Activated T-helper 1 cell treated with anti-CD3 and anti-CD28 coated beads, Interleukin-12 subunit alpha, Interleukin-12 subunit beta, Interleukin-2, Interleukin-4 antibody, amounts not matched to agents 30 ng/mL and 10 ng/mL and 1 ng/mL, durations not matched to agents 14 hours and 24 hours and 36 hours (primary cell): ENCODE measurements at regions of chr2 and their contacts with region 1.

Region 1: DNA sequence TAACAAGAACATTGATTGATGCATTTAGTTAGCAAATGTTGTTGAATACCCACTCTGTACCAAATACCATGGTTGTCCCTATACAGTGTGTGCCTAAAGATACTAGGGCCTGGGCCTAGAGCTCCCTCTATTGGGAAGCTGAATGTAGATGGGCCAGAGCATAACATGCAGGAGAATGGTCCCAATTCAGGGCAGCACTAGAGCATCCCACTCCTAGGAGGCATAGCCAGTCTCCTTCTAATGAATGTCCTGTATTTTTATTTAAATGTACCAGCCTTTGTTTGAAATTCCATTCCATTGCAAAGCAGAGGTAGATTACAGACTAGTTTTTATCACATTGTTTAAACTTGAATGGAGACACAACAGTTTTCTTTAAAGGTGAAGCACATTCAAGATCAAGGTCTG is 90.6 kb downstream of the FEZ2 start:
- DNase-seq: no peak
- H3K4me3 Mint-ChIP-seq: no peak overlapping the region
- H3K27ac Mint-ChIP-seq: no peak overlapping the region
- H3K4me1 Mint-ChIP-seq: no peaks in the 10 kb centered on the region
- H3K27me3 Mint-ChIP-seq: no peaks in the 10 kb centered on the region

Region 2: DNA sequence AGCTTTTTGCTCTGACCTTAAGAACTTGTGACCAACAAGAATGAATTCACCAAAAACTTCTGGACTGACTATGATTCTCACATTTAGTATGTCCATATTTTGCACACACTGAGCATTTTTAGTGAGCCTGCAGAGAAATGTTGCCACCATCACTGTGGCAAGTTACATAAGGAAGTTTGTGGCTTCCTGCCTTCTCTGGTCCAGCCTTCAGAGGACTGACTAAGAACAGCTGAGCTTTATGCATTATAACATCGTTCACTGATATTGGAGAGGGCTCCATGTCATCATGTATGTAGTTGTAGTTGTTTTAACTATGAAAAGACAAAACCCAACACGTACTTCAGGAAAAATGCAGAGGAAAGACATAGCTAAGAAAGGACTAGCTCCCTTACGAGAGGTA is 369.8 kb before region 1 on chr2:
- intact Hi-C with region 1: no loop called
- DNase-seq: no peak
- H3K4me3 Mint-ChIP-seq: no peak overlapping the region
- H3K27ac Mint-ChIP-seq: no peak overlapping the region
- H3K4me1 Mint-ChIP-seq: peaks cover 20% of the 10 kb centered on the region
- H3K27me3 Mint-ChIP-seq: peaks cover 24% of the 10 kb centered on the region

Region 3: DNA sequence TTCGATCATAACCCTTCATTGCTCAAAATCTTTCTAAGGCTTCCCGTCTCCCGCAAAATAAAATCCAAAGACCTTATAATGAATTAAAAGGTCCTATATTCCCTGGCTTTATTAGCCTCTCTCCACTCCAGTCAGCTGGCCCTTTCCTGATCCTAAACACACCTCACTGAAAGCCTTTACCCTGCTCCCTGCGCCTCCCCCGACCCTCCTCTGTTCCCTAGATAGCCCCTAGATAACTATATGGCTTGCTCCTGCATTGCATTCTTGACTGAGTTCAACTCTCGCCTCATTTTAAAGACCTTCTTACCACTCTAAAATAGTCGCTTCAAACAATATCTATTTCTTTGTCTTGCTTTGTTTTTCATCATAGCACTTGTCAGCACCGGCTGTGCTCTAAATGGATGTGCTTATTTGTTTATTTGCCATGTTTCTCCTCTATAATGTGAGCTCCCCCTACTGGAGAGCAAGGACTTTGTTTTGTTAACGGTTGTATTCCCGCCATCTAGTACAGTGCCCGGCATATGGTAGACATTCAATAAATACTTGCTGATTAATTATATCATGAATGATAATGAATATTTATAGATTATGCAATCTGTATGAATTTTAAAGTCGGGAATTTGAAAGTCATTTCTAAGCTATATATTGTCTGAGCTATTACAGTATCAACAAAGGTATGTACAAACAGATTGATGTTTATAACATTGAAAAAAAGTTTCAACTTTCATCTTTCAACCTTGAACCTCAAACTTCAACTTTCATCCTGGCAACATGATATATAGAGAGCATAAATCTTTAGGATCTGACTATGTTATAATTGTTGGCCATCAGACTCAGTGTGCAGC is 156.7 kb after region 1 on chr2:
- intact Hi-C with region 1: loop called (anchors 2 kb)
- DNase-seq: no peak
- H3K4me3 Mint-ChIP-seq: no peak overlapping the region
- H3K27ac Mint-ChIP-seq: no peak overlapping the region
- H3K4me1 Mint-ChIP-seq: no peaks in the 10 kb centered on the region
- H3K27me3 Mint-ChIP-seq: peaks cover 5% of the 10 kb centered on the region